Breast epithelium (tissue), 4 donors: ENCODE measurements at regions of chr2 and their contacts with region 1.

Region 1: DNA sequence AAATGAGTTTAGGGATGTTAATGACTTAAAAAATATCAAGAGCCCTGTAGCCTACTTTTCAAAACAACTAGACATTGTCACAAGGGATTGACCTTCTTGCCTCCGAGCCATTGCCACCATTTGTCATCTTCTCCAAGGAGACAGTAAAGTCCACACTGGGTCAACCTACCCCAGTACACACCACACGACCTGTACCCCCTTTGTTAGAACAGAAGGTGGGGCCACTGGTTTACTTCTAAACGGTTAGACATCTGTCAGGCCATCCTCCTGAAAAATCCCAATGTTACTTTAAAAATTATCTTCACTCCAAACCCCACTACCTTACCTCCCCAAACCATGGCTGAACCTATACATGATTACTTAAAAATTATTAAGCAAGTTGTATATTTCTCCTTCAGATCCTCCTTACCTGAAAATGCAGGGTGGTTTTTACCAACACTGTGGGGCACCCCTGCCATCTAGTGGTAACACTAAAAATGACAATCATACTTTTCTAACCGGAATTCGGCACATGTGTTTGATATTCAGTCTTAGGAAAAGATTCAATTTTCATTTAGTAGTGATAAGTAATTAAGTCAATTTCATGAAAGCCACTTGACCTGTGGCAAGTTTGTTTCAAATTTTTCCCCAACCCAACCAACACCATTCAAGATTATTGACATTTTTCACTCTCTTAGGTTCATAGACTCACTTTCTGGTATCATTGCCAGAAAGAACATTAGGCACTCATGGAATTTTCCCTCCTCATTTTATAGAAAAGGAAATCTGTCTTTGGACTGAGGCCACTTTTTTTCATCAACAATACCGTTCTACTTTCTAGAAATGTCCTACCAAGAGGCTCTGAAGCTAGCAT is 265.3 kb upstream of the PKDCC start:
- DNase-seq: no peak
- H3K4me3 ChIP-seq: no peak overlapping the region
- H3K27ac ChIP-seq: no peak overlapping the region
- H3K4me1 ChIP-seq: no peaks in the 10 kb centered on the region
- H3K27me3 ChIP-seq: no peaks in the 10 kb centered on the region
- CTCF ChIP-seq: peak; percentile 48 to 79 (median 66)
- POLR2A ChIP-seq: no peak

Region 2: GRCh38 chr2:39913648-39914461 is 1868.7 kb before region 1 on chr2:
- intact Hi-C with region 1: loop called (anchors 10 kb)
- DNase-seq: no peak
- H3K4me3 ChIP-seq: no peak overlapping the region
- H3K27ac ChIP-seq: no peak overlapping the region
- H3K4me1 ChIP-seq: no peaks in the 10 kb centered on the region
- H3K27me3 ChIP-seq: no peaks in the 10 kb centered on the region
- CTCF ChIP-seq: peak; percentile 22 to 83 (median 64)
- POLR2A ChIP-seq: no peak

Region 3: DNA sequence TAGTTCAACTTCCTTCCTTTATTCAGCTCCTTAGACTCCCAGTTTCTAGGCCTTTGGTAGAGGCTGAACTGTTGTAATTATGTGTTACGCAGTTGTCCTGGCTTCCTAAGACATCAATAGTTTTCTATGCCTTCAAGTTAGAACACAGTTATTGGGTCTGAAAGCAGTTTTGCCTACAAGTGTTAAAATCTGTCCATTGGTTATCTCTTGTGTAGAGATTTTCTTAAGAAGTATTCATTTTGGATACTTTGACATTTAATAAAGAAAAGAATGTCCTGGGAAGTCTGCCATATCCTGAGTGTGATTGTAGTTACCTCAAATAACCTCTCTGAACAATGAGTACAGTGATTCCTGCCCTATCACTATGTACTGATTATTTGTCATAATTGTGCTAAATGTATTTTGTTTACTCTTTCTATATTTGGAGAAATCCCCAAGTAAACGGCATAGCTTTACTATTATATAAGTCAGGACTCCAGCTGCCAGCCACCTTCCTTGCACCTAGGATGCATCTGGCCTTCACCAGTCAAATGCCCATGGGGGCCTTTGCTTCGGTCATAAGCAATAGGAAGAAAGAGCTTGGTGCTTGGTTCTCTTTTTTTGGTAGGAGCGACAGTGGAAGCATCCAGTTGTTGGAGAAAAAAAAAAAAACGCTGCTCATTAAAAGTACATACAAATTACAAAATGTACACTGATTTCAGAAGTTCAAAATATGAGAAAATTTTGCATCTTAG is 184.2 kb before region 1 on chr2:
- intact Hi-C with region 1: no loop called
- DNase-seq: peak in 1 of 2 donors; percentile 18
- H3K4me3 ChIP-seq: no peak overlapping the region
- H3K27ac ChIP-seq: peak overlapping the region; percentile 33 to 59
- H3K4me1 ChIP-seq: no peaks in the 10 kb centered on the region
- H3K27me3 ChIP-seq: no peaks in the 10 kb centered on the region
- CTCF ChIP-seq: no peak
- POLR2A ChIP-seq: no peak

Region 4: GRCh38 chr2:41750829-41751228 is 31.7 kb before region 1 on chr2:
- intact Hi-C with region 1: loop called (anchors 1 kb)
- DNase-seq: no peak
- H3K4me3 ChIP-seq: no peak overlapping the region
- H3K27ac ChIP-seq: no peak overlapping the region
- H3K4me1 ChIP-seq: no peaks in the 10 kb centered on the region
- H3K27me3 ChIP-seq: no peaks in the 10 kb centered on the region
- CTCF ChIP-seq: no peak
- POLR2A ChIP-seq: no peak